Activated B cell treated with CpG ODN at 0.5 μM for 24 hours (primary cell): ENCODE measurements at regions of chr13 and their contacts with region 1.

Region 1: DNA sequence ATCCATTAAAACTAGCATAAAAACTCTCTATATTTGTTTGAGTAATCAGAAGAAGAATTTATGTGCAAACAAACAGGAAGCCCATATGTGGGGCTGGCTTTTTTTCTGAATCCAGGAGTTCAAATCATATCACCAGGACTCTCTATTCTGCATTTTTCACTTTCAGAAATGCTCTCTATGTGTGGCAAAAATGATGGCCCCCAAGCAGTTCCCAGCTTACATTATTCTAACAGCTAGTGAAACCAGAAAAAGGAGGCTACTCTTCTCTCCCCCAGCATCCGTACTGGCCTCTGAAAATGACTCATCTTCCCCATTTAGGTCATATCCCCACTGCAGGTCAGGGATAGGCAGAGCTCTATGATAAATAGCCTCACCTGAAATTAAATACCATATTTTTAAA is 20.4 kb downstream of the RBM26 start:
- DNase-seq: no peak
- ATAC-seq: peak; percentile 76
- H3K4me3 Mint-ChIP-seq: no peak overlapping the region
- H3K27ac Mint-ChIP-seq: no peak overlapping the region
- H3K4me1 Mint-ChIP-seq: peaks cover 80% of the 10 kb centered on the region
- H3K27me3 Mint-ChIP-seq: no peaks in the 10 kb centered on the region
- CTCF ChIP-seq: no peak

Region 2: GRCh38 chr13:79365981-79366380 is 19.7 kb before region 1 on chr13:
- CTCF ChIA-PET with region 1: interaction called, 7 read pairs
- POLR2A ChIA-PET with region 1: no interaction called
- intact Hi-C with region 1: loop called (anchors 2 kb)
- DNase-seq: no peak
- ATAC-seq: no peak
- H3K4me3 Mint-ChIP-seq: no peak overlapping the region
- H3K27ac Mint-ChIP-seq: no peak overlapping the region
- H3K4me1 Mint-ChIP-seq: peaks cover 4% of the 10 kb centered on the region
- H3K27me3 Mint-ChIP-seq: no peaks in the 10 kb centered on the region
- CTCF ChIP-seq: no peak

Region 3: GRCh38 chr13:81078048-81078447 is 1692.4 kb after region 1 on chr13:
- CTCF ChIA-PET with region 1: no interaction called
- POLR2A ChIA-PET with region 1: no interaction called
- intact Hi-C with region 1: no loop called
- DNase-seq: no peak
- ATAC-seq: no peak
- H3K4me3 Mint-ChIP-seq: no peak overlapping the region
- H3K27ac Mint-ChIP-seq: no peak overlapping the region
- H3K4me1 Mint-ChIP-seq: no peaks in the 10 kb centered on the region
- H3K27me3 Mint-ChIP-seq: no peaks in the 10 kb centered on the region
- CTCF ChIP-seq: no peak